MCF 10A (cell line): ENCODE measurements at regions of chr12 and their contacts with region 1.

Region 1: GRCh38 chr12:110600254-110600653 is 13.7 kb upstream of the TCTN1 start:
- DNase-seq: peak; percentile 68
- H3K4me3 Mint-ChIP-seq: no peak overlapping the region
- H3K27ac Mint-ChIP-seq: no peak overlapping the region
- H3K4me1 Mint-ChIP-seq: peaks cover 7% of the 10 kb centered on the region
- H3K27me3 Mint-ChIP-seq: no peaks in the 10 kb centered on the region
- CTCF ChIP-seq: peak; percentile 66

Region 2: GRCh38 chr12:110449799-110450497 is 150.3 kb before region 1 on chr12 and contains the start of gene ARPC3:
- CTCF ChIA-PET with region 1: interaction called, 61 read pairs
- POLR2A ChIA-PET with region 1: interaction called, 32 read pairs
- intact Hi-C with region 1: loop called (anchors 1 kb)
- DNase-seq: peak; percentile 93
- H3K4me3 Mint-ChIP-seq: peak within 1 kb of the TSS; percentile 99
- H3K27ac Mint-ChIP-seq: peak within 1 kb of the TSS; percentile 100
- H3K4me1 Mint-ChIP-seq: peaks cover 5% of the 10 kb centered on the region
- H3K27me3 Mint-ChIP-seq: no peaks in the 10 kb centered on the region
- CTCF ChIP-seq: peak; percentile 83
- total RNA-seq, gene ARPC3: 230 and 245 TPM in 2 replicates

Region 3: GRCh38 chr12:110508071-110508586 is 92.1 kb before region 1 on chr12:
- CTCF ChIA-PET with region 1: interaction called, 239 read pairs
- POLR2A ChIA-PET with region 1: interaction called, 9 read pairs
- intact Hi-C with region 1: loop called (anchors 1 kb)
- DNase-seq: no peak
- H3K4me3 Mint-ChIP-seq: no peak overlapping the region
- H3K27ac Mint-ChIP-seq: no peak overlapping the region
- H3K4me1 Mint-ChIP-seq: no peaks in the 10 kb centered on the region
- H3K27me3 Mint-ChIP-seq: no peaks in the 10 kb centered on the region
- CTCF ChIP-seq: no peak

Region 4: GRCh38 chr12:110548678-110549077 is 51.6 kb before region 1 on chr12:
- CTCF ChIA-PET with region 1: interaction called, 34 read pairs
- POLR2A ChIA-PET with region 1: interaction called, 5 read pairs
- intact Hi-C with region 1: loop called (anchors 1 kb)
- DNase-seq: no peak
- H3K4me3 Mint-ChIP-seq: peak overlapping the region; percentile 66
- H3K27ac Mint-ChIP-seq: peak overlapping the region; percentile 85
- H3K4me1 Mint-ChIP-seq: peaks cover 62% of the 10 kb centered on the region
- H3K27me3 Mint-ChIP-seq: no peaks in the 10 kb centered on the region
- CTCF ChIP-seq: no peak

Region 5: GRCh38 chr12:110583137-110584059 is 16.9 kb before region 1 on chr12 and contains the start of gene PPTC7:
- CTCF ChIA-PET with region 1: interaction called, 12 read pairs
- POLR2A ChIA-PET with region 1: interaction called, 6 read pairs
- intact Hi-C with region 1: no loop called
- DNase-seq: peak; percentile 97
- H3K4me3 Mint-ChIP-seq: peak within 1 kb of the TSS; percentile 96
- H3K27ac Mint-ChIP-seq: peak within 1 kb of the TSS; percentile 81
- H3K4me1 Mint-ChIP-seq: peaks cover 10% of the 10 kb centered on the region
- H3K27me3 Mint-ChIP-seq: no peaks in the 10 kb centered on the region
- CTCF ChIP-seq: no peak
- total RNA-seq, gene PPTC7: 32.0 and 36.5 TPM in 2 replicates

Region 6: GRCh38 chr12:110888256-110888991 is 288.2 kb after region 1 on chr12:
- CTCF ChIA-PET with region 1: interaction called, 8 read pairs
- POLR2A ChIA-PET with region 1: interaction called, 3 read pairs
- intact Hi-C with region 1: loop called (anchors 2 kb)
- DNase-seq: no peak
- H3K4me3 Mint-ChIP-seq: peak overlapping the region; percentile 86
- H3K27ac Mint-ChIP-seq: peak overlapping the region; percentile 35
- H3K4me1 Mint-ChIP-seq: peaks cover 9% of the 10 kb centered on the region
- H3K27me3 Mint-ChIP-seq: peaks cover 17% of the 10 kb centered on the region
- CTCF ChIP-seq: no peak